Calu3 (cell line): ENCODE measurements at regions of chr4 and their contacts with region 1.

Region 1: DNA sequence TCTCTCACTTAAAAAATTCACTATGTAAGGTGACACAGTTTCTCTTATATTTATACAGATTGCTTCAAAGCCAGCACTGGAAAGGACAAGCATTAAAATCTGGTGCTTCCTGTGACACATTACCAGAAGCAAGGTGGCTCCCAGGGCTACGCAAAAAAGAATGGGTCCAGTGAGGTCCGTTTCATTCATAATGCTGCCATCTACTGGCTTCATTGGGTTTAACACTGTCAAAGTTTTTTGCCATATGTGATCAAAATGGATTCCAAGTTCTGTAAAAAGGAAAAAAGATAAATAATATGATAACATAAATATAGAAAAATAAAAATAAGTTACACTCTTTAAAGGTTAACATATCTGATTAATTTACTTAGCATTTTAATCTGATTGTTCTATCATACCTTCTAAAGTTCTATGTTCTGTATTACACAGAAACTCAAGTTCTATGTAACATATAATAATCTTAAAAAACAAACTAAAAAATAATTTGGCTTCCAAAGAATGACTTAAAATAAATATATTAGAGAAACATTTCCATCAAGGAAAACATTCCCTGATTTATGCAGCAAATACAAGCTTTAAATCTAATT is 22.1 kb downstream of the YIPF7 start:
- DNase-seq: peak; percentile 30
- H3K4me3 Mint-ChIP-seq: no peak overlapping the region
- H3K27ac Mint-ChIP-seq: no peak overlapping the region
- H3K4me1 Mint-ChIP-seq: no peaks in the 10 kb centered on the region
- H3K27me3 Mint-ChIP-seq: no peaks in the 10 kb centered on the region
- CTCF ChIP-seq: no peak

Region 2: GRCh38 chr4:42881253-42881652 is 1748.1 kb before region 1 on chr4:
- CTCF ChIA-PET with region 1: no interaction called
- intact Hi-C with region 1: no loop called
- DNase-seq: no peak
- H3K4me3 Mint-ChIP-seq: no peak overlapping the region
- H3K27ac Mint-ChIP-seq: no peak overlapping the region
- H3K4me1 Mint-ChIP-seq: no peaks in the 10 kb centered on the region
- H3K27me3 Mint-ChIP-seq: no peaks in the 10 kb centered on the region
- CTCF ChIP-seq: no peak

Region 3: GRCh38 chr4:42995343-42995944 is 1633.9 kb before region 1 on chr4:
- CTCF ChIA-PET with region 1: no interaction called
- intact Hi-C with region 1: loop called (anchors 1 kb)
- DNase-seq: no peak
- H3K4me3 Mint-ChIP-seq: no peak overlapping the region
- H3K27ac Mint-ChIP-seq: no peak overlapping the region
- H3K4me1 Mint-ChIP-seq: no peaks in the 10 kb centered on the region
- H3K27me3 Mint-ChIP-seq: no peaks in the 10 kb centered on the region
- CTCF ChIP-seq: peak; percentile 19

Region 4: DNA sequence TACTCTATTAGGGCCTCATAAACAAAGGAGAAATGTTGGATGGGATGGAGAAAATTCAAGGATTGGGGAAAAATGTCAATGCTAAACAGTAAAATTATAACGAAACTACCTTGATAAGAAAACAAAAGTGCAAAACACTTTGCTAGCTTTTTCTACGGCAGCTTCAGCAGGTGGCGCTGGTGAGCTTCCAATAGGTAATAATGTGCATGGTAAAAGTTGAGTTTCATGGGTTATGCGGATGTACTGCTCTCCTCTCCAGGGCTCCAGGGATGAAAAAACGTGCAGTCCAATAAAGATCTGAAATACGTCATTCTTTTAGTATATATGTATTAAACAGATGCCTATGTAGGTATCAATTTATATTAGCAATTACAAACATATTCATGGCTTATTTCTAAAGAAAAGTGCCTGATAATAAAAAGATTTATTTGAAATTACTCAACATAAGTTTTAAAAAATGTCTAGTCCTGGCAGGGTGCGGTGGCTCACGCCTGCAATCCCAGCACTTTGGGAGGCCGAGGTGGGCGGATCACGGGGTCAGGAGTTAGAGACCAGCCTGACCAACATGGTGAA is 1497.3 kb before region 1 on chr4:
- CTCF ChIA-PET with region 1: no interaction called
- intact Hi-C with region 1: loop called (anchors 5 kb)
- DNase-seq: peak; percentile 54
- H3K4me3 Mint-ChIP-seq: no peak overlapping the region
- H3K27ac Mint-ChIP-seq: no peak overlapping the region
- H3K4me1 Mint-ChIP-seq: no peaks in the 10 kb centered on the region
- H3K27me3 Mint-ChIP-seq: no peaks in the 10 kb centered on the region
- CTCF ChIP-seq: peak; percentile 34

Region 5: DNA sequence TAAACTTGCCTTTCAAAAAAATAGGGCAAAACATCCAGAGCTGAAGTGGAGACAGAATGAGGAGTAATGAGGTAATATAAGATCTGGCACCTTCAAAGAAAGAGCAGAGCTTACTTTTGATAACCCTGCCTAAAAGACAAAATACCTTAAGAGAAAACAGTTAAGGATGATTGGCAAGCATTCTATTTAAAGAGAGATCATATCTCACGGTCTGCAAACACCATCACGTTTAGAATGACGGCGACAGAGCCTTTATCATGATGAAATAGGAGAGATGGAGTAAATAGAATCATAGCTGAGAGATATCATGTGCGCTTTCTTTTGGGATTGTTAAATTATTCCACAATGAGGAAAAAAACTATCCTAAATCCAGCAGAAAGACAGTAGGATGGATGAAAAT is 61.6 kb before region 1 on chr4:
- CTCF ChIA-PET with region 1: no interaction called
- intact Hi-C with region 1: loop called (anchors 2 kb)
- DNase-seq: no peak
- H3K4me3 Mint-ChIP-seq: no peak overlapping the region
- H3K27ac Mint-ChIP-seq: no peak overlapping the region
- H3K4me1 Mint-ChIP-seq: no peaks in the 10 kb centered on the region
- H3K27me3 Mint-ChIP-seq: no peaks in the 10 kb centered on the region
- CTCF ChIP-seq: no peak